Natural killer cell (primary cell): ENCODE measurements at regions of chr6 and their contacts with region 1.

Region 1: DNA sequence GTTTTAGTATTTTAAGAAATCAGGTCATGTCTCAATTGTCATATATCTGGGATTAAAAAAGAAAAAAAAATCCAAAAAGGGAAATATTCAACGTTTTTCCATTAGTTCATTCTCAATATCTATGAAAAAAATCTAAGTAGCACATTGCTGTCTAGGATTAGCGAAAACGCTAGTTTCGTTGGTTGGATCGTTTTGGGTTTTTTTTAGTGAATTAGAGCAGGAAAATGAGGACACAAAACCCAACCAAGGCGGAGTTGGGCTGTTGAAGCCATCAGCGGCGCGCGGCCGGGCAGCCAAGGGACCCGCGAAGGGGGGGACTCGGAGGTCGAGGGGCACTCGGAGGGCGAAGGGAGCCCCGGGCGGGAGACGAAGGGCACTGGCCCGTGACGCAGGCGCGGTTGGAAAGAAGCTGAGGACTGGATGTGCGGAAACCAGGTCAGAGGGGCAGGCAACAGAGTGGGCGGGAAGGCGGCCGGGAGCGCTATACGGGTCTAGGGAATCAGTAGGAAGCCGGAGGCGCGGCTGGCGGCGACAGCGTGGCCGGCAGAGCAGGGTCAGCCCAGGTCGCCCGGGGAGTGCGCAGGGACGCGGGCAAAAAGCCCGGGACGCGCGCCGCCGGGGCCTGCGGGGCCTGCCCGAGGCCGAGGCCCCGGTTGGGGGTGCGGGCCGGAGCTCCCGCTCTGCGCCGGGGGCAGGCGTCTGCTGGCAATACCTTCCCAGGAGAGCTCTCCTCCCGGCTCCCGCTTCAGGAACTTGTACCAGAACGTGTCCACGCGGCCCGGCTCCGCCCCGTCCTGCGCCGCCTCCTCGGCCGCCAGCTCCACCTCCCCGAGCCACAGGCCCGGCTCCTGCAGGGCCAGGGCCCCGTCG is 599 bp downstream of the EPM2A start:
- DNase-seq: peak; percentile 60 to 73
- ATAC-seq: peak; percentile 73 to 80 (median 79)
- H3K4me3 ChIP-seq: peak overlapping the region; percentile 63
- H3K4me3 Mint-ChIP-seq: peak overlapping the region; percentile 99
- H3K27ac ChIP-seq: peak overlapping the region; percentile 64
- H3K27ac Mint-ChIP-seq: peak overlapping the region; percentile 90 to 95
- H3K4me1 ChIP-seq: peaks cover 5% of the 10 kb centered on the region
- H3K4me1 Mint-ChIP-seq: peaks cover 0 to 10% of the 10 kb centered on the region in 2 donors
- H3K27me3 ChIP-seq: no peaks in the 10 kb centered on the region
- H3K27me3 Mint-ChIP-seq: no peaks in the 10 kb centered on the region
- CTCF ChIP-seq: no peak

Region 2: GRCh38 chr6:145814501-145815308 is 80.0 kb after region 1 on chr6 and contains the start of gene FBXO30:
- intact Hi-C with region 1: loop called (anchors 5 kb)
- DNase-seq: peak; percentile 87 to 94
- ATAC-seq: peak; percentile 89 to 99 (median 93)
- H3K4me3 ChIP-seq: peak within 1 kb of the TSS; percentile 99
- H3K4me3 Mint-ChIP-seq: peak within 1 kb of the TSS; percentile 92
- H3K27ac ChIP-seq: peak within 1 kb of the TSS; percentile 85
- H3K27ac Mint-ChIP-seq: peak within 1 kb of the TSS; percentile 87 to 93
- H3K4me1 ChIP-seq: peaks cover 18% of the 10 kb centered on the region
- H3K4me1 Mint-ChIP-seq: peaks cover 29 to 46% of the 10 kb centered on the region in 2 donors
- H3K27me3 ChIP-seq: no peaks in the 10 kb centered on the region
- H3K27me3 Mint-ChIP-seq: no peaks in the 10 kb centered on the region
- CTCF ChIP-seq: no peak
- total RNA-seq, gene FBXO30: 3.4 to 6.4 (median 5.9) TPM

Region 3: DNA sequence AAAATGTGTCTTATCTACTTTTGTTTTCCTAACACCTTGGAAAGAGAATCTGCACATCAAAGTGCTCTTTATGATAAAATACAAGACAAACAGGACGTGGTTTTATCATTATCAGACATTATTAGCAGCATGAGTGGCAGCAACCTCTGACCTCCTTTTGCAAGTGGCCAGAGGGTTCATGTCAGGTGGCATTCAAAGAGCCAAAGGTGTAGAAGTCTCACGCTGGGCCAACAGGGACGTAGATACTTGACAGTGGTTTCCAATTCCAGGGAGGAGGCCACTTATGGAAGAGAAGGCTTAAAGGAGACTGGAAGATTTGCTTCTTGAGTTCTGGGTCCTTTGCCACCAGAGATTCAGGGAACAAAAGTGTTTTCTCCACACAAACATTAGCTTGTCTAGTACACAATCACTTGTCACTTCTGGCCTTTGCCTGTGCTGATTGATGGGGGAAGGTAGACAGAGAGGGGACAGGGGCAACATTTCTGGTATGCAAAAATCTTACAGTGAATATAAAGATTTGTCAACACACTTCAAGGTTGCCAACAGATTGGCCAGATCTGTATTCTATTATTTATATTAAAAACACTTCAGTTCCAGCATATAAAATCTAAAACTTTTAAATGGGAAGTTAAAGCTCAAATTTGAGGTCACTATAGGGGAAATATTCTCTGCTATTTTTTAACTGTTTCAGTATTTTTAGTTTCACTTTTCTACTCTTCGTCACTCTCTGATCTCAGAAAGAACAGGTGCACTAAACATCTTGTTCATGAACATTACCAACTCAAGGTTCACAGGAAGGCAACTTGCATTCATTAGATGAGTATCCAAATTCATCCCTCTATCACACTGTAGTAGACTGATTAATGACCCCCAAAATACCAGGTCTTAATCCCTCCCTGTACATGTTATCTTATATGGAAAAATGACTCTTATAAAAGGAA is 132.0 kb after region 1 on chr6:
- intact Hi-C with region 1: loop called (anchors 10 kb)
- DNase-seq: peak in 1 of 2 donors; percentile 41
- ATAC-seq: peak; percentile 31 to 57 (median 52)
- H3K4me3 ChIP-seq: no peak overlapping the region
- H3K4me3 Mint-ChIP-seq: peak overlapping the region; percentile 70
- H3K27ac ChIP-seq: peak overlapping the region; percentile 50
- H3K27ac Mint-ChIP-seq: peak overlapping the region; percentile 84 to 86
- H3K4me1 ChIP-seq: peaks cover 12% of the 10 kb centered on the region
- H3K4me1 Mint-ChIP-seq: peaks cover 37 to 42% of the 10 kb centered on the region in 2 donors
- H3K27me3 ChIP-seq: no peaks in the 10 kb centered on the region
- H3K27me3 Mint-ChIP-seq: no peaks in the 10 kb centered on the region
- CTCF ChIP-seq: no peak

Region 4: DNA sequence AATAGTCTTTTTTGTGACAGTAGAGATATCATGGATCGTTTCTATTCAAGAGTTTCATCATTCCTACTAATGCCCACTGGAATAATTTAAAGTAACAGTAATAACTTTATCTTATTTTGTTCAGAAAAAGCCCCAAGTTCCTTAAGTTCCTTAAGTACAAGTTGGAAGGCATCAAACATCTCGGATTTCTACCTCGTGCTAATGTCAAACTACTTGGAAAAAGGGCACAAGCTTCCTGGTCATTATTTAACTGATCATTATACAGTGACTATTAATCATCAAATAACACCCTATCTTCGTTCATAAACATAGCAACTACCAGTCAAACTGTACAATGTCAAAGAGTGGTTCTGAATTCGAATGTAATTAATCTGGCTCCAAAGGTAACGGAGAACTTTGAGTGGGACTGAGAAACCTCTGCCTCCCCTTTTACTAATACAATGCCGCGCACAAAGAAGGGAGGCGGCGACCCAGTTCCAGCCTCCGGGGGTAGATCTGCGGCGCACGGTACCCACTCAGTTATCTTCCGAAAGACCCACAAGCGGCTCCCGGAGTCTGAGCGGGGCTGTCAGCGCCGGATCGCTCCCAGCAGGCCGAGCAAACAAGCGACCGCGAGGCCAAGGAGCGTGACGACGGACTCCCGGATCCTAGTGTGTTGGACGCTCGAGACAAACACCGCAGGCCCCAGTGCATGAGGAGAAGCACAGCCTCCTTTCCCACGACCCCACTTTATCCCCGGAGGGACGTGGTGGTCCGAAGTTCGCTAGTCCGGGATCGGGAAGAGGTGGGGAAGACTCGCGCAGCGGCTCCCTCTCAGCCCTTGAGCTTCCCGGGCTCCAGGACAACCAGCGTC is 228.7 kb after region 1 on chr6:
- intact Hi-C with region 1: loop called (anchors 10 kb)
- DNase-seq: peak; percentile 38 to 62
- ATAC-seq: peak in 1 of 3 donors; percentile 8
- H3K4me3 ChIP-seq: peak overlapping the region; percentile 90
- H3K4me3 Mint-ChIP-seq: peak overlapping the region; percentile 97
- H3K27ac ChIP-seq: peak overlapping the region; percentile 82
- H3K27ac Mint-ChIP-seq: peak overlapping the region; percentile 93 to 95
- H3K4me1 ChIP-seq: peaks cover 6% of the 10 kb centered on the region
- H3K4me1 Mint-ChIP-seq: peaks cover 26 to 30% of the 10 kb centered on the region in 2 donors
- H3K27me3 ChIP-seq: no peaks in the 10 kb centered on the region
- H3K27me3 Mint-ChIP-seq: peaks cover 0 to 2% of the 10 kb centered on the region in 2 donors
- CTCF ChIP-seq: no peak